ENCODE measurements at regions of chr3 and their contacts with region 1.

Region 1: GRCh38 chr3:67692621-67693020 is 38.2 kb upstream of the SUCLG2 start:
- DNase-seq: no peak
- ATAC-seq: no peak
- H3K4me3 ChIP-seq: no peak overlapping the region
- H3K27ac ChIP-seq: no peak overlapping the region
- H3K4me1 ChIP-seq: no peaks in the 10 kb centered on the region
- H3K27me3 ChIP-seq: no peaks in the 10 kb centered on the region

Region 2: GRCh38 chr3:67421912-67422311 is 270.7 kb before region 1 on chr3:
- intact Hi-C with region 1: loop called in 1 of 2 experiments (anchors 10 kb)
- DNase-seq: no peak
- ATAC-seq: no peak
- H3K4me3 ChIP-seq: no peak overlapping the region
- H3K27ac ChIP-seq: no peak overlapping the region
- H3K4me1 ChIP-seq: no peaks in the 10 kb centered on the region
- H3K27me3 ChIP-seq: no peaks in the 10 kb centered on the region

Region 3: GRCh38 chr3:67723863-67724262 is 31.2 kb after region 1 on chr3:
- intact Hi-C with region 1: no loop called
- DNase-seq: no peak
- ATAC-seq: no peak
- H3K4me3 ChIP-seq: no peak overlapping the region
- H3K27ac ChIP-seq: no peak overlapping the region
- H3K4me1 ChIP-seq: no peaks in the 10 kb centered on the region
- H3K27me3 ChIP-seq: no peaks in the 10 kb centered on the region

Region 4: DNA sequence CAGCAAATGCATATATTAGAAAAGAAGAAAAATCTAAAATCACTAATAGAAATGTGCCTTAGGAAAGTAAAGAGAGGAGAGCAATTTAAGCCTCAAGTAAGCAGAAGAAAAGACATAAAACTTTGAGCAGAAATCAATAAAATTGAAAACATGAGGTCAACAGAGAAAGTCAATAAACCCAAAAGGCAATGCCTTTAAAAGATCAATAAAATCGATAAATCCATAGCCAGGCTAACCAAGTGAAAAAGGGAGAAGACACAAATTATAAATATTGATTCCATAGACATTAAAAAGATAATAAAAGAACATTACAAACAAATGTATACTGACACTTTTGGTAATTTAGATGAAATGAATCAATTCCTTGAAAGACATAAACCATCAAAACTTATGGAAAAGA is 63.0 kb after region 1 on chr3:
- intact Hi-C with region 1: no loop called
- DNase-seq: no peak
- ATAC-seq: no peak
- H3K4me3 ChIP-seq: no peak overlapping the region
- H3K27ac ChIP-seq: no peak overlapping the region
- H3K4me1 ChIP-seq: no peaks in the 10 kb centered on the region
- H3K27me3 ChIP-seq: no peaks in the 10 kb centered on the region